Gastrocnemius medialis (tissue), 4 donors: ENCODE measurements at regions of chr6 and their contacts with region 1.

Region 1: GRCh38 chr6:125670568-125670967 is 78.9 kb upstream of the HEY2 start:
- DNase-seq: peak; percentile 13 to 78
- ATAC-seq: peak; percentile 83 to 96
- H3K4me3 ChIP-seq: peak overlapping the region in 1 of 4 donors; percentile 23
- H3K27ac ChIP-seq: peak overlapping the region; percentile 59 to 80 (median 70)
- H3K4me1 ChIP-seq: peaks cover 10 to 18% of the 10 kb centered on the region in 2 donors
- H3K27me3 ChIP-seq: no peaks in the 10 kb centered on the region
- CTCF ChIP-seq: no peak
- POLR2A ChIP-seq: no peak

Region 2: DNA sequence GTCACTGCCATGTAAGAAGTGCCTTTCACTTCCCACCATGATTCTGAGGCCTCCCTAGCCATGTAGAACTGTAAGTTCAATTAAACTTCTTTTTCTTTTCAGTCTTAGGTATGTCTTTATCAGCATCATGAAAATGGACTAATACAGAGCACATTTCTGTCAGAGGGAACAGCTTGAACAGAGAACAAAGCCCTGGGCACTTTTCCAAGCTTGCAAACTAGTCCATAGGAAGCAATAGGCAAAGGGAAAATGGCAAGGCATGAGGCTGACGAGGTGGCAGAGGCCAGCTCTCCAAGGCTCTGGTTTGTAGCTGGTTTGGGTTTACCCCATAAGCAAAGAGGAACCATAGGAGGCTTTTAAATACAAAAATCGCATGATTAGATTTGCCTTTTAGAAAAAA is 183.7 kb before region 1 on chr6:
- in situ Hi-C with region 1: no loop called
- intact Hi-C with region 1: no loop called
- DNase-seq: no peak
- ATAC-seq: no peak
- H3K4me3 ChIP-seq: no peak overlapping the region
- H3K27ac ChIP-seq: no peak overlapping the region
- H3K4me1 ChIP-seq: no peaks in the 10 kb centered on the region
- H3K27me3 ChIP-seq: no peaks in the 10 kb centered on the region
- CTCF ChIP-seq: no peak
- POLR2A ChIP-seq: no peak

Region 3: GRCh38 chr6:125598422-125598821 is 72.1 kb before region 1 on chr6:
- in situ Hi-C with region 1: no loop called
- intact Hi-C with region 1: loop called (anchors 2 kb)
- DNase-seq: peak; percentile 83 to 95
- ATAC-seq: peak; percentile 97 to 98
- H3K4me3 ChIP-seq: peak overlapping the region in 3 of 4 donors; percentile 20 to 39 (median 30)
- H3K27ac ChIP-seq: peak overlapping the region; percentile 84 to 95 (median 90)
- H3K4me1 ChIP-seq: peaks cover 29 to 30% of the 10 kb centered on the region in 2 donors
- H3K27me3 ChIP-seq: no peaks in the 10 kb centered on the region
- CTCF ChIP-seq: no peak
- POLR2A ChIP-seq: peak in 1 of 2 donors; percentile 21

Region 4: GRCh38 chr6:125742466-125743120 is 72.0 kb after region 1 on chr6:
- in situ Hi-C with region 1: no loop called
- intact Hi-C with region 1: loop called (anchors 2 kb)
- DNase-seq: no peak
- ATAC-seq: no peak
- H3K4me3 ChIP-seq: peak overlapping the region; percentile 25 to 86 (median 50)
- H3K27ac ChIP-seq: peak overlapping the region; percentile 89 to 99 (median 94)
- H3K4me1 ChIP-seq: peaks cover 11 to 36% of the 10 kb centered on the region in 2 donors
- H3K27me3 ChIP-seq: no peaks in the 10 kb centered on the region
- CTCF ChIP-seq: no peak
- POLR2A ChIP-seq: no peak